H1 (cell line): ENCODE measurements at regions of chr4 and their contacts with region 1.

Region 1: DNA sequence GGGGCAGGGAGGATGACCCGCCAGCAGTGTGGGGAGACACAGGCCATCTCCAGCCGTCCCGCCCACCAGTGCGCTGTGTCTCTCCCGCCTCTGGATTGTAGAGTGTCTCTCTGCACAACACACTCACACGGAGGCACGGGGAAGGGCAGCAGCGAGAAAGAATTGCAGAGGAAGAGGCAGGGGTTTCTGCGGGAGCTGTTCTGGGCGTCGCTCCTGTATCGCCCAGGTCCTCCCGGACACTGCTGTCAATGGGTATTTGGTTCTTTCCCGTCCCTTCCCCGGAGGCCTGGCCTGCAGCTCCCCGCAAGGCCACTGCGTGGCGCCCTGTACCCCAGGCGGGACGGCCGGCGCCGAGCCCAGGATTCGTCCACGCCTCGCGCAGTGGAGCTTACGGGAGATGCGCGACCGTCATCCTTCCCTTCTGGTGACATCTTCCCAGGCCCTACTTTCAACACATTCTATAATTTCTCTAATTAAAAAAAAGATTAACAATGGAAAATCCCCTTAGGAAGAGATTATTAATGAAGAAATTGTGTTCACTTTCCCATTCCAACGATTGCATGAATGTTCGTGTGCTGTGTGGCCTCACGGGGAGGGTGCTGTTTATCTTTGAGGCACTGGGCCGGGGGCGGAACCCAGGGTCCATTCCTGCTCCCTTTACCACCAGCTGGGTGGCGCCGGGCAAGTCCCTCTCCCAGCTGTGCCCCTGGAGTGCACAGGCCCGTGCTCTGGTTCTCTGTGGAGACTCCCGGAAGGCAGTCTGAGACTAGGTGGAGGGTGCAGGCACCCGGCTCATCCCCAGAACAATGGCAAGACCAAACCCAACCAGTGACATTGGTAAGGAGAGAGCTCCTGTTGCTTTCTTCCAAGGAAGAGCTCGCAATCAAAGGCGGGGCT is 95.7 kb downstream of the CPZ start:
- DNase-seq: peak; percentile 25 to 95
- H3K4me3 ChIP-seq: no peak overlapping the region
- H3K27ac ChIP-seq: no peak overlapping the region
- H3K4me1 ChIP-seq: peaks cover 0 to 3% (median under 1%) of the 10 kb centered on the region in 4 experiments; a peak in 2 of 7 replicates
- H3K27me3 ChIP-seq: peaks cover 0 to 27% (median 10%) of the 10 kb centered on the region in 4 experiments; a peak in 5 of 7 replicates
- CTCF ChIP-seq: peak in 2 of 3 experiments; percentile 92 to 95; a peak in 3 of 4 replicates
- EP300 ChIP-seq: no peak
- POLR2A ChIP-seq: no peak
- RAD21 ChIP-seq: peak; percentile 85 to 92

Region 2: DNA sequence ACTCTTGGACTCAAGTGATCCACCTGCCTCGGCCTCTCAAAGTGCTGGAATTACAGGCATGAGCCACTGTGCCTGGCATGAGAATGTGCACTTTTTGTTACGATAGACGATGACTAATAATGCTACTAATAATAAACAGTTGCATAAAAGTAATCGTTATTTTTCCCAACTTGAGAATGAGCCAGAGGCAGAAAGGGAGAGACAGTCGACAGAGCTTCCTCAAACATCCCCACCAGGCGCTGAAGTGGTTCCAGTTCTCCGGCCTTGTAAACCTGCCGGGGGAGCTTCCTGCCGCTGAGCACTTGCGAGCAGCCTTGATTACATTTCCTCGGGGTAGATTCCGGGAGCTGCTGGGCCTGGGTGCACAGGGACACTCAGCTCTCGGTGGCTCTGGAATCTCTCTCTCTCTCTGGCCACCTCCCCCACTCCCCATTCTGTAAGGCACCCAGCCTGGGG is 427.6 kb before region 1 on chr4:
- CTCF ChIA-PET with region 1: no interaction called
- POLR2A ChIA-PET with region 1: no interaction called
- DNase-seq: no peak
- H3K4me3 ChIP-seq: no peak overlapping the region
- H3K27ac ChIP-seq: no peak overlapping the region
- H3K4me1 ChIP-seq: peaks cover 0 to 8% (median 2%) of the 10 kb centered on the region in 4 experiments; a peak in 4 of 7 replicates
- H3K27me3 ChIP-seq: no peaks in the 10 kb centered on the region
- CTCF ChIP-seq: no peak
- EP300 ChIP-seq: no peak
- POLR2A ChIP-seq: no peak
- RAD21 ChIP-seq: no peak

Region 3: GRCh38 chr4:8459867-8460447 is 228.3 kb before region 1 on chr4:
- CTCF ChIA-PET with region 1: no interaction called
- POLR2A ChIA-PET with region 1: no interaction called
- DNase-seq: no peak
- H3K4me3 ChIP-seq: no peak overlapping the region
- H3K27ac ChIP-seq: no peak overlapping the region
- H3K4me1 ChIP-seq: no peaks in the 10 kb centered on the region
- H3K27me3 ChIP-seq: no peaks in the 10 kb centered on the region
- CTCF ChIP-seq: no peak
- EP300 ChIP-seq: no peak
- POLR2A ChIP-seq: no peak
- RAD21 ChIP-seq: no peak

Region 4: GRCh38 chr4:8705161-8706145 is 17.2 kb after region 1 on chr4:
- CTCF ChIA-PET with region 1: interaction called, 16 read pairs
- POLR2A ChIA-PET with region 1: no interaction called
- DNase-seq: peak in 1 of 2 experiments; percentile 47
- H3K4me3 ChIP-seq: no peak overlapping the region
- H3K27ac ChIP-seq: no peak overlapping the region
- H3K4me1 ChIP-seq: peaks cover 0 to 9% (median 2%) of the 10 kb centered on the region in 4 experiments; a peak in 5 of 7 replicates
- H3K27me3 ChIP-seq: no peaks in the 10 kb centered on the region
- CTCF ChIP-seq: no peak
- EP300 ChIP-seq: no peak
- POLR2A ChIP-seq: no peak
- RAD21 ChIP-seq: no peak

Region 5: DNA sequence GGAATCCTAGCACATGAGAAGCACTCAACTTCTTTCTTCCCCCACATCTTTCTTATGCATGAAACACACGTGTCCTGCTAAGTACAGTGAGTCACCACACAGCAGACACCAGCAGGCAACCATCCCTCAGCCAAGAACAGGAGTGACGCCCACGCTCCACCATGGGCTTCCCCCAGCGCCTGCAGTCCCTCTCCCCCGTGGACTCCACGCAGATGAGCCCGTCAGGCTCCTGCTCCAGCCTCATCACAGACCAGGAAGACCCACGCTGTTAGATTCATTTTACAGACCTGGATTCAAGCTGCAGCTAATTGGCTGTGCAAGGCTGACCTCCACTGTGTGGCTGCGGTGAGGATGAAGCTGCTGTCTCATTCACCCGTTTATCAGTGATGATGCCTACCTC is 166.6 kb after region 1 on chr4:
- CTCF ChIA-PET with region 1: interaction called, 25 read pairs
- POLR2A ChIA-PET with region 1: no interaction called
- DNase-seq: no peak
- H3K4me3 ChIP-seq: no peak overlapping the region
- H3K27ac ChIP-seq: no peak overlapping the region
- H3K4me1 ChIP-seq: peaks cover 0 to 33% (median 23%) of the 10 kb centered on the region in 4 experiments; a peak in 6 of 7 replicates
- H3K27me3 ChIP-seq: peaks cover 59 to 70% (median 66%) of the 10 kb centered on the region in 4 experiments
- CTCF ChIP-seq: no peak
- EP300 ChIP-seq: no peak
- POLR2A ChIP-seq: no peak
- RAD21 ChIP-seq: 0 out of 4 replicates have a peak, but pooled peaks of 1 of the 2 experiments have one; percentile 7

Region 6: GRCh38 chr4:8917868-8918783 is 229.8 kb after region 1 on chr4:
- CTCF ChIA-PET with region 1: interaction called, 10 read pairs
- POLR2A ChIA-PET with region 1: no interaction called
- DNase-seq: peak; percentile 62 to 98
- H3K4me3 ChIP-seq: no peak overlapping the region
- H3K27ac ChIP-seq: no peak overlapping the region
- H3K4me1 ChIP-seq: no peaks in the 10 kb centered on the region
- H3K27me3 ChIP-seq: peaks cover 0 to 13% (median 5%) of the 10 kb centered on the region in 4 experiments; a peak in 2 of 7 replicates
- CTCF ChIP-seq: peak in 2 of 3 experiments; percentile 90 to 95; a peak in 3 of 4 replicates
- EP300 ChIP-seq: no peak
- POLR2A ChIP-seq: no peak
- RAD21 ChIP-seq: peak; percentile 97 to 99